ENCODE measurements at regions of chr9 and their contacts with region 1.

Region 1: DNA sequence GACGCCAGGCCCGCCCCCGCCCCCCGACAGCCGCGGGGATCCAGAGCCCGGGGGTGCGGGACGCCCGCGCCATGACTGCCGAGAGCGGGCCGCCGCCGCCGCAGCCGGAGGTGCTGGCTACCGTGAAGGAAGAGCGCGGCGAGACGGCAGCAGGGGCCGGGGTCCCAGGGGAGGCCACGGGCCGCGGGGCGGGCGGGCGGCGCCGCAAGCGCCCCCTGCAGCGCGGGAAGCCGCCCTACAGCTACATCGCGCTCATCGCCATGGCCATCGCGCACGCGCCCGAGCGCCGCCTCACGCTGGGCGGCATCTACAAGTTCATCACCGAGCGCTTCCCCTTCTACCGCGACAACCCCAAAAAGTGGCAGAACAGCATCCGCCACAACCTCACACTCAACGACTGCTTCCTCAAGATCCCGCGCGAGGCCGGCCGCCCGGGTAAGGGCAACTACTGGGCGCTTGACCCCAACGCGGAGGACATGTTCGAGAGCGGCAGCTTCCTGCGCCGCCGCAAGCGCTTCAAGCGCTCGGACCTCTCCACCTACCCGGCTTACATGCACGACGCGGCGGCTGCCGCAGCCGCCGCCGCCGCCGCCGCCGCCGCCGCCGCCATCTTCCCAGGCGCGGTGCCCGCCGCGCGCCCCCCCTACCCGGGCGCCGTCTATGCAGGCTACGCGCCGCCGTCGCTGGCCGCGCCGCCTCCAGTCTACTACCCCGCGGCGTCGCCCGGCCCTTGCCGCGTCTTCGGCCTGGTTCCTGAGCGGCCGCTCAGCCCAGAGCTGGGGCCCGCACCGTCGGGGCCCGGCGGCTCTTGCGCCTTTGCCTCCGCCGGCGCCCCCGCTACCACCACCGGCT is 1.0 kb downstream of the FOXE1 start:
- DNase-seq: peak; percentile 41 to 87
- ATAC-seq: peak; percentile 87 to 92
- H3K4me3 ChIP-seq: peak overlapping the region; percentile 74
- H3K27ac ChIP-seq: peak overlapping the region; percentile 96 to 98
- H3K4me1 ChIP-seq: peaks cover 28% of the 10 kb centered on the region
- CTCF ChIP-seq: peak; percentile 75
- EP300 ChIP-seq: no peak
- POLR2A ChIP-seq: peak; percentile 77
- RAD21 ChIP-seq: peak; percentile 17 to 65; a peak in 4 of 5 replicates

Region 2: GRCh38 chr9:97721396-97721795 is 132.7 kb before region 1 on chr9:
- CTCF ChIA-PET with region 1: interaction called, 14 read pairs
- POLR2A ChIA-PET with region 1: no interaction called
- DNase-seq: no peak
- ATAC-seq: no peak
- H3K4me3 ChIP-seq: no peak overlapping the region
- H3K27ac ChIP-seq: no peak overlapping the region
- H3K4me1 ChIP-seq: 0 out of 3 replicates have a peak, but pooled peaks cover 3% of the 10 kb centered on the region
- CTCF ChIP-seq: no peak
- EP300 ChIP-seq: no peak
- POLR2A ChIP-seq: no peak
- RAD21 ChIP-seq: no peak

Region 3: GRCh38 chr9:97811527-97812246 is 42.4 kb before region 1 on chr9:
- CTCF ChIA-PET with region 1: interaction called, 10 read pairs
- POLR2A ChIA-PET with region 1: interaction called, 10 read pairs
- DNase-seq: no peak
- ATAC-seq: no peak
- H3K4me3 ChIP-seq: no peak overlapping the region
- H3K27ac ChIP-seq: no peak overlapping the region
- H3K4me1 ChIP-seq: peaks cover 10% of the 10 kb centered on the region; the same call in 2 of the 3 replicates
- CTCF ChIP-seq: no peak
- EP300 ChIP-seq: no peak
- POLR2A ChIP-seq: no peak
- RAD21 ChIP-seq: no peak

Region 4: GRCh38 chr9:97868859-97869258 is 14.8 kb after region 1 on chr9:
- CTCF ChIA-PET with region 1: interaction called, 14 read pairs
- POLR2A ChIA-PET with region 1: interaction called, 3 read pairs
- DNase-seq: no peak
- ATAC-seq: no peak
- H3K4me3 ChIP-seq: no peak overlapping the region
- H3K27ac ChIP-seq: no peak overlapping the region
- H3K4me1 ChIP-seq: peaks cover 4% of the 10 kb centered on the region; the same call in 1 of the 3 replicates
- CTCF ChIP-seq: no peak
- EP300 ChIP-seq: no peak
- POLR2A ChIP-seq: no peak
- RAD21 ChIP-seq: no peak

Region 5: GRCh38 chr9:97874624-97875023 is 20.6 kb after region 1 on chr9:
- CTCF ChIA-PET with region 1: interaction called, 14 read pairs
- POLR2A ChIA-PET with region 1: interaction called, 14 read pairs
- DNase-seq: no peak
- ATAC-seq: no peak
- H3K4me3 ChIP-seq: no peak overlapping the region
- H3K27ac ChIP-seq: peak overlapping the region; percentile 84 to 90
- H3K4me1 ChIP-seq: peaks cover 34% of the 10 kb centered on the region
- CTCF ChIP-seq: no peak
- EP300 ChIP-seq: no peak
- POLR2A ChIP-seq: no peak
- RAD21 ChIP-seq: no peak

Region 6: DNA sequence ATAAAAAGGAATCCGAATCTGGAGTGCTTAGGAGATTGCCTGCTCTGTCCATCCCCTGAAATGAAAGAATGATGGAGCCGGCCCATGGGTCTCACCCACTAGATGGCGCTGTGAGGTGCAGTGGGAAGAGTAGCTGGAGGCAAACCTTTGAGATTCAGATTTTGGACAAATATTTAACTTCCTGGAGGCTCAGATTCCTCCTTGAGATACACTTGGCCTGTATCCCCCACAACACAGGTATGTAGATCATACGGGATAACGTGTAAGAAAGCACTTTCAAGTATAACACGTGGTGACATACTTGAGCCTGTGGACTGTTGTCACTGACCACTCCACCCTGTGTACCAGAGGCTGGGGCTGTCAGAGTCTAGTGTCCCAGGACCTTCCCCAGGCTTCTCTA is 36.0 kb after region 1 on chr9:
- CTCF ChIA-PET with region 1: interaction called, 7 read pairs
- POLR2A ChIA-PET with region 1: interaction called, 12 read pairs
- DNase-seq: peak; percentile 21 to 46
- ATAC-seq: peak in 1 of 2 experiments; percentile 72; a peak in 3 of 6 replicates
- H3K4me3 ChIP-seq: no peak overlapping the region
- H3K27ac ChIP-seq: no peak overlapping the region
- H3K4me1 ChIP-seq: no peaks in the 10 kb centered on the region
- CTCF ChIP-seq: peak; percentile 50
- EP300 ChIP-seq: no peak
- POLR2A ChIP-seq: no peak
- RAD21 ChIP-seq: no peak; a peak in 1 of 5 replicates

Measured in A549 (cell line).